ENCODE measurements at regions of chr5 and their contacts with region 1.

Region 1: GRCh38 chr5:123423278-123424149 is at the start of gene CEP120:
- DNase-seq: peak; percentile 94 to 99 (median 95)
- H3K4me3 ChIP-seq: peak within 1 kb of the TSS; percentile 72
- H3K4me3 Mint-ChIP-seq: no peak within 1 kb of the TSS
- H3K27ac ChIP-seq: peak within 1 kb of the TSS; percentile 97
- H3K27ac Mint-ChIP-seq: peak within 1 kb of the TSS in 1 of 8 donors; percentile 99
- H3K4me1 ChIP-seq: peaks cover 34% of the 10 kb centered on the region
- H3K4me1 Mint-ChIP-seq: peaks cover 15 to 20% (median 16%) of the 10 kb centered on the region in 3 donors
- H3K27me3 ChIP-seq: no peaks in the 10 kb centered on the region
- H3K27me3 Mint-ChIP-seq: no peaks in the 10 kb centered on the region
- total RNA-seq, gene CEP120: 23.5 to 25.6 TPM

Region 2: DNA sequence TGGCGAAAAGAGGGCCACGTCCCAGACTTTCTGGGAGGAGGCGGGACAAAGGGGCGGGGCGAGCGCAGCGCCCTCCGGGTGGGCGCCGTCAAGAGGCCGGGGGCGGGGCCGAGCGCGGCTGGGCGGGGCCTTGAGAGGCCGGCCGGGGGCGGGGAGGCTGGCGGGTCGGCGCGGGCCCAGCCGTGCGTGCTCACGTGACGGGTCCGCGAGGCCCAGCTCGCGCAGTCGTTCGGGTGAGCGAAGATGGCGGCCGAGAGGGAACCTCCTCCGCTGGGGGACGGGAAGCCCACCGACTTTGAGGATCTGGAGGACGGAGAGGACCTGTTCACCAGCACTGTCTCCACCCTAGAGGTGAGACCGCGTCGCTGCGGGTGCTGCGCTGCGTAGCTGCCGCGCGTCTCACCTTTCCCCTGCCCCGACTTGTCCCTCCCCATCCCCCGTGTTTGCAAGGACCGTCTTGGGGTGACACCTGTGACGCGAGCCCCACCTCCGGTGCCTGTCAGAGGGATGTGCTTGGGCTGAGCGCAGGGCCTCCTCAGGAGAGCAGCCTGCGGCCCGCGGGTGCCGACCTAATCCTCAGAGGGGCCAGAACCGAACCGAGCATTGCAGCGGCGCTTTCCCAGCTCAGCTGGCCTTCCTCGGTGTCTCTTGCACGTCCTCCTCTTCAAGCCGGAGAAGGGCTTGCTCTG is 648.5 kb before region 1 on chr5 and contains the start of gene SNX2:
- CTCF ChIA-PET with region 1: interaction called, 6 read pairs
- POLR2A ChIA-PET with region 1: interaction called, 28 read pairs
- DNase-seq: peak; percentile 86 to 92 (median 90)
- H3K4me3 ChIP-seq: peak within 1 kb of the TSS; percentile 93
- H3K4me3 Mint-ChIP-seq: peak within 1 kb of the TSS; percentile 93 to 95 (median 94)
- H3K27ac ChIP-seq: peak within 1 kb of the TSS; percentile 85
- H3K27ac Mint-ChIP-seq: peak within 1 kb of the TSS; percentile 91 to 97 (median 96)
- H3K4me1 ChIP-seq: peaks cover 34% of the 10 kb centered on the region
- H3K4me1 Mint-ChIP-seq: peaks cover 33 to 58% (median 58%) of the 10 kb centered on the region in 3 donors
- H3K27me3 ChIP-seq: no peaks in the 10 kb centered on the region
- H3K27me3 Mint-ChIP-seq: peaks cover 0 to 2% of the 10 kb centered on the region in 2 donors
- total RNA-seq, gene SNX2: 40.0 to 42.7 TPM

Region 3: DNA sequence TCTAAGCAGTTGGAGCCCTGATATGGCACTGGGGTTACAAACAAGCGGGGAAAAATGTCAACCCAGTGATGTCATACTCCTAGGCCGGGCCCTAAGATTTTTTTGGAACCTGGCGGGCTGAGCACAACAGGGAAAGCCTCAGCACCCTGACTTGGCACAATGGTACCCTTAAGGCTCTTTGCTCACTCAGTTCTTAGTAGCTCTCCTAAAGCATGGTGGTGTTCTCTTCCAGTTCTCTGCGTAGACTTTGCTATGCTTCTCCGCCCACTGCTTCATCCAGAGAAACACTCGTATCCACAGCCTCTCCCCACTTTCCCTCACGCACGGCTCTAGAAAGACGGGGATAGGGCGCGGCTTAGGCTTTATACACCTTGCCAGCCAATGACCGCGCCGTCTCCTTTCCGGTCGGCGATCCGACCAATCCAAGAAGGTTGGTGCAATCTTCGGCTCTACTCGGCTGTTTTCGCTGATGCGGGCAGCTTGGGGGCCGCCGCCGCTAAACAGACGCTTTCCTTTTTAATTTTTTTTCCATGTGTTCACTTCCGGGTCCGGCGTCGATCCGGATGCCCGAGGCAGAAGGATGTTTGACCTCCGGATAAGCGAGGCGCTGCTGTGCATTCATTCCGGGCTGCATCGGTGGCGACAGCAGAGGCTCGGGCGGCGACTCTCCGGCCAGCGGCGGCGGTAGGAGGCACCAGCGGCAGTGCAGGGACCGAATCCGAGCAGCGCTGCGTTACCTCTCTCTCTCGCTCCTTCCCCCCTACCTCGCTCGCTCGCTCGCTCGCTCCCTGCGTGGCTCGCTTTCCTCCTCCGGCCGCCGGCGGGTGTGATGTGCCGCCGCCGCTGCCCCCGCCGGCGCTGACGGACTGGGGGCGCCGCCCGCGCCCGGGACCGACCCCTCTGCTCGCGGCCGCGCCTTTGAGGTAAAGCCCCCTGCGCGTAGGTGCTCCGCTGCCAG is 88.4 kb after region 1 on chr5 and contains the start of gene CSNK1G3:
- CTCF ChIA-PET with region 1: interaction called, 35 read pairs
- POLR2A ChIA-PET with region 1: interaction called, 68 read pairs
- DNase-seq: peak; percentile 85 to 95 (median 91)
- H3K4me3 ChIP-seq: peak within 1 kb of the TSS; percentile 65
- H3K4me3 Mint-ChIP-seq: peak within 1 kb of the TSS; percentile 92 to 100 (median 97)
- H3K27ac ChIP-seq: peak within 1 kb of the TSS; percentile 70
- H3K27ac Mint-ChIP-seq: peak within 1 kb of the TSS; percentile 92 to 99 (median 98)
- H3K4me1 ChIP-seq: peaks cover 32% of the 10 kb centered on the region
- H3K4me1 Mint-ChIP-seq: peaks cover 35 to 57% (median 47%) of the 10 kb centered on the region in 3 donors
- H3K27me3 ChIP-seq: no peaks in the 10 kb centered on the region
- H3K27me3 Mint-ChIP-seq: peaks cover 4 to 6% of the 10 kb centered on the region in 2 donors
- total RNA-seq, gene CSNK1G3: 48.3 to 51.9 TPM

Region 4: DNA sequence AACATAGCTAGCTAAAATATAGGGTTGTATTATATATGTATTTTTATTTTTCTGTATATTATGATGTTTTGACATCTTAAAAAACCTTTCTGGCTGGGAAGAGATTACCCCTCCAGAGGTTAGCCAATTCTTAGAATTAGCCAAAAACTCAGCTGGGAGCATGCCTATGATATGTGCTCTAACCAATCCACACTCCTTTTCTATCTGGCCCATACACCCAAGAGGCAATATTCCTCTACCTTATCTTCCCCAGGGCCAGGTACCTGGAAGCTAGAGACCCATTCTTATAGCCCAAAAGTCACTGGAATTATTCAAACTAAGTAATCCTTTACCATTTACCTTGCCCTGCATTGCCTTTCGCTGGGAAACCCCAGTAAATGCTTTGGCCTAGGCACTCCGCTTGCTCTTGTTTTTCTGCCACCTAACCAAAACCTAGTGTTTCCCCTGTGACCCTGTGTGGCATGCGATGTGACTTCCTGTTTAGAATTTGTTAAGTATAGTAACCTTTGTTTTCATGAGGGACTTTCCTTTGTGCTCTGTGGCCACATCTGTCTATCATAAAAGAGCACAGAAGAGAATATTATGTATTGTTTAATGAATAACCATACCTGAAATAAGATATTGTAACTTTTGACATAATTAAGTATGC is 125.9 kb after region 1 on chr5:
- CTCF ChIA-PET with region 1: interaction called, 26 read pairs
- POLR2A ChIA-PET with region 1: interaction called, 27 read pairs
- DNase-seq: peak; percentile 39 to 84 (median 59)
- H3K4me3 ChIP-seq: peak overlapping the region; percentile 21
- H3K4me3 Mint-ChIP-seq: peak overlapping the region in 6 of 7 donors; percentile 36 to 81 (median 56)
- H3K27ac ChIP-seq: peak overlapping the region; percentile 38
- H3K27ac Mint-ChIP-seq: peak overlapping the region; percentile 60 to 99 (median 96)
- H3K4me1 ChIP-seq: peaks cover 18% of the 10 kb centered on the region
- H3K4me1 Mint-ChIP-seq: peaks cover 34 to 67% (median 56%) of the 10 kb centered on the region in 3 donors
- H3K27me3 ChIP-seq: no peaks in the 10 kb centered on the region
- H3K27me3 Mint-ChIP-seq: no peaks in the 10 kb centered on the region

Region 5: DNA sequence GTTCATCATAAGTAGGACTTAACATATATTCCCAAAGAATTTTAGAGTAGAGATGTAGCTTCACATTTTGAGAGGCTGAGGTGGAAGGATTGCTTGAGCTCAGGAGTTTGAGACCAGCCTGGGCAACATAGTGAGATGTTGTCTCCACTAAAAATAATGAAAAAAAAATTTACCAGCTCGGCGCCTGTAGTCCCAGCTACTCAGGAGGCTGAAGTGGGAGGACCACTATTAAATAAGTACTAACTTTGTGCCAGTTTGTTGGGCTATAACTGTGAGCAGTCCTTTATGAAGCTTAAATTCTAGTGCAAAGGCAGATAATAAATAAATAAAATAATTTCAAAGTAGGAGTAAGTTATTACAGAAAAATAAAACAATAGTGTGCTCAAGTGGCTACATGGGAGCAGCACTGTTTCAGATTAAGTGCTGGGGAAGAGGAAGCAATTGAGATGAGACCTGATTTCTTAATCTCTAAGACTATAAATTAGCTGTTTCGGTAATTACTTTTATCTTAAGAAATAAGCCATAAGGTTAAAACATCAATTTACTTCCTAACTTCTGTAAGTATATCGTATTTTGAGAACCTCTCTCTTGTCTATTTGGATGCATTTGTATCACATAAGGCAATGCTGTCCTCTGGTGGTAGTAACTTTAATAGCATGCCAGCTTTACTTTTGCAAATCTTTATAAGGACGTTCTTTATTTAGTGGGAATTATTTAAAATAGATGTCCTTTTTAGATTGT is 187.3 kb after region 1 on chr5:
- CTCF ChIA-PET with region 1: interaction called, 36 read pairs
- POLR2A ChIA-PET with region 1: interaction called, 11 read pairs
- DNase-seq: peak in 3 of 5 donors; percentile 22 to 45 (median 41)
- H3K4me3 ChIP-seq: no peak overlapping the region
- H3K4me3 Mint-ChIP-seq: no peak overlapping the region
- H3K27ac ChIP-seq: peak overlapping the region; percentile 10
- H3K27ac Mint-ChIP-seq: peak overlapping the region in 6 of 8 donors; percentile 1 to 81 (median 29)
- H3K4me1 ChIP-seq: no peaks in the 10 kb centered on the region
- H3K4me1 Mint-ChIP-seq: peaks cover 0 to 10% (median 3%) of the 10 kb centered on the region in 3 donors
- H3K27me3 ChIP-seq: no peaks in the 10 kb centered on the region
- H3K27me3 Mint-ChIP-seq: no peaks in the 10 kb centered on the region